SK-N-SH (cell line): ENCODE measurements at regions of chr1 and their contacts with region 1.

Region 1: DNA sequence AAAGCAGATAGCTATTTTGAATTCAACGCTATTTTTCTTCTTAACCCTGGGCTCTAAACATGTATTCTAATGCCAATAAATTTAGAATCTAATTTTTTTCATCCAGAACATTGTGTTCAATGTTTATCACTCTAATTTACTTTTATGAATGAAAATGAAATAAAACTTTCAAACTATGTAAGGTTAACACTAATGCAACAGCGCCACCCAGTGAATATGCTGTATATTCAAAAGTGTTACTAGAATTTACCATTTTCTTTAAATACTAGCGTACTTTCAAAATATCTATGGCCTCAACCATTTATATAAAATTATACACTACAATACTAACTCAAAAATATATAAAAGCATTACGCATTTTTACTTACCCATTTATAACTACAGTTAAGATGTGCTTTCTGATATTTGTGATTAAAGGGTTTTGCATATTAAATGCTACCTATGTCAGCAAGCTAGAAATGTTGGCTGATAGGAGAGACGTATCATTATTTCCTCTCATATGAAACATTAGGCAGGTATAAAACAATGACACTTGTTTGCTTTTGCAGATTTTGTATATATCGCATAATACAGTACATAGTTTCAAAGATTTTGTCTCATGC is 5.9 kb upstream of the NUF2 start:
- DNase-seq: peak; percentile 12
- H3K4me3 ChIP-seq: no peak overlapping the region; a peak in 1 of 4 replicates
- H3K27ac ChIP-seq: peak overlapping the region; percentile 5 to 55; a peak in 3 of 4 replicates
- H3K4me1 ChIP-seq: peaks cover 8 to 9% of the 10 kb centered on the region in 2 experiments; a peak in 3 of 4 replicates
- H3K27me3 ChIP-seq: no peaks in the 10 kb centered on the region
- CTCF ChIP-seq: peak; percentile 88
- EP300 ChIP-seq: no peak
- RAD21 ChIP-seq: peak; percentile 84

Region 2: DNA sequence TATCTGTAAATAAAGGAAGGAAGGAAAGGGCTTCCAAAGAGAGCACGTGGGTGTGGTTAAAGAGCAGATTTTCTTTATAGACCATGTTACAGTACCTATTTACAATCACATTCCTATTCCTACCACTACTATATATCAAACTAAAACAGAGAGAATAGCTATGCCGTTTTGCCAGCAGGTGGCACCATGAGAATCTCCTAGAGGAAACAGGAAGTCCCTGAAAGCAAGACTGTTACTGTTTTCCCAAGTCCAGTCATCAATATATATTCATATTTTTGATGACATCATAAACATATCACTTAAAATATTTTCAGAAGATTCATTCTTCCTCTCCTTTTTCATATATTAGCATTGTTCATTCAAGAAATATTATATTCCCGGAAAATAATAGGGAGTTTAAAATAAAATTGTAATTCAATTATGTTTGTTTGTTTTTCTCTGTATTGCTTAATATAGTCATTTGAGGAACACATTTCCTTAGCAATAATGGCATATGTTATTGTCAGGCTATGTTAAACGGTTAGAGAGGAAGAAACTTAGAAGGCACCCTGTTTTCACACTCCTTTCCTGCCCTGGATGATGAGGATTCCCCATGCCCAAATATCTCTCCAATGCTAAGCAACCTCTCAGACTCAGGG is 461.5 kb before region 1 on chr1:
- CTCF ChIA-PET with region 1: interaction called, 85 read pairs
- POLR2A ChIA-PET with region 1: no interaction called
- DNase-seq: peak; percentile 66
- H3K4me3 ChIP-seq: no peak overlapping the region; a peak in 1 of 4 replicates
- H3K27ac ChIP-seq: peak overlapping the region; percentile 58 to 92; a peak in 3 of 4 replicates
- H3K4me1 ChIP-seq: peaks cover 8 to 43% of the 10 kb centered on the region in 2 experiments; a peak in 3 of 4 replicates
- H3K27me3 ChIP-seq: no peaks in the 10 kb centered on the region
- CTCF ChIP-seq: peak; percentile 94
- EP300 ChIP-seq: no peak
- RAD21 ChIP-seq: peak; percentile 85

Region 3: DNA sequence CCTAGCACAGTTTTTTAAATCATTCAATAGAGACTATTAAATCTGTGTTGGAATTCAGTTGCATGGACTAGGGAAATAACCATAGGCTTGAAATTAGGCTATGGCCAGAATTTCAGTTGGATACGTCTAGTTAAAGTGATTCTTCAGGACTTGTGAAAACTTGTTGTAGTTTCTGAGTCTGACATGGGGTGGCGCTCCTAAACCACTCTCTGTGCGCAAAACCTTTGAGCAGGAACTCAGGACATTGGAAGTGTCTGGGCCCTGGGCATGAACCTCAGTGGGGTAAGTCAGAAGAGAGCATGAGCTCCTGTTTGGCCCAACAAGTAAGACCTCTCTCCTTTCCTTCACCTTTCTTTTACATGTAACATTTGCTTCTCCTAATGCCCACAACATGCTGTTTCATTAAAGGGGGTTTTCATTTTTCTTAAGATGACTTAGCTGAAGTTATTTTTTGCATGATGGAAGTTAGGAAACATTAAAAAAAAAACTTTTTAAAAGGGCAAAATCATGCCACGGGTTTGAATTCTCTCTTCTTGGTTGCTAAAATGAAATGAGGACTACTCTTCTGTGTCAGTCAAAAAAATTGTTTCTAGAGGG is 437.8 kb before region 1 on chr1:
- CTCF ChIA-PET with region 1: interaction called, 51 read pairs
- POLR2A ChIA-PET with region 1: interaction called, 18 read pairs
- DNase-seq: peak; percentile 33
- H3K4me3 ChIP-seq: no peak overlapping the region; a peak in 1 of 4 replicates
- H3K27ac ChIP-seq: peak overlapping the region; percentile 60 to 87
- H3K4me1 ChIP-seq: peaks cover 19 to 24% of the 10 kb centered on the region in 2 experiments
- H3K27me3 ChIP-seq: no peaks in the 10 kb centered on the region
- CTCF ChIP-seq: peak; percentile 91
- EP300 ChIP-seq: no peak
- RAD21 ChIP-seq: peak; percentile 100

Region 4: GRCh38 chr1:163071405-163072255 is 244.2 kb before region 1 on chr1:
- CTCF ChIA-PET with region 1: interaction called, 33 read pairs
- POLR2A ChIA-PET with region 1: interaction called, 8 read pairs
- DNase-seq: peak; percentile 44
- H3K4me3 ChIP-seq: peak overlapping the region; percentile 69 to 82
- H3K27ac ChIP-seq: peak overlapping the region; percentile 91 to 99
- H3K4me1 ChIP-seq: peaks cover 36 to 37% of the 10 kb centered on the region in 2 experiments; a peak in 3 of 4 replicates
- H3K27me3 ChIP-seq: no peaks in the 10 kb centered on the region
- CTCF ChIP-seq: peak; percentile 74
- EP300 ChIP-seq: peak in 1 of 2 experiments; percentile 36; a peak in 1 of 4 replicates
- RAD21 ChIP-seq: peak; percentile 74

Region 5: DNA sequence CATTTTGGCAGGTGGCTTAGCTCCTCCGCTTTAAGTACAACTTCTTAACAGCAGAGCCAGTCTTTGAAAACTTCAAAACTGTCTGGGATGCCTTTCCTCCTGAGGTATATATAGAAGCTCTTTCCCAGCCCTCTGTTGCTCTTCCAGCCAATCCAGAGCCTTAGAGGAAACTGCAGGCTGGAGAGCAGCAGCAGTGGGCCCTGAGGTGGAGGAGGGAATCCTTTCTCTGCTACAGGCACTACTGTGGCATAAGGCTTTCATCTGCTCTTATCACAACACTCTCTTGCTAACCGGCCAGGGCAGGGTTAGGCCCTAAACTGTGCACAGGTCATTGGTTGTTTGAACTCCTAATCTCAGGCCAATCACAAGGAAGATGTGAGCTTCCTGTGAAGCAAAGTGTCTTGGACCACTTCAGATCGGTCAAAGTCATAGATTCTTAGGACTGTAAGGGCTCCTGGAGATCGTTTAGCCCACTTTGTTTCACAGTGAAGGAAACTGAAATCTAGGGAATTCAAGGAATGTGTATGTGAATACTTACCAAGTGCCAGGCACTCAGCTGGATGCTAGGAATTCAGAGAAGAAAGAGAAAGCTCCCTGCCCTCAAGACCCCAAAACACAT is 112.9 kb before region 1 on chr1 and contains the start of gene RGS5:
- CTCF ChIA-PET with region 1: interaction called, 14 read pairs
- POLR2A ChIA-PET with region 1: interaction called, 37 read pairs
- DNase-seq: peak; percentile 73
- H3K4me3 ChIP-seq: peak within 1 kb of the TSS; percentile 62 to 66
- H3K27ac ChIP-seq: peak within 1 kb of the TSS; percentile 77 to 99
- H3K4me1 ChIP-seq: peaks cover 18 to 25% of the 10 kb centered on the region in 2 experiments; a peak in 3 of 4 replicates
- H3K27me3 ChIP-seq: no peaks in the 10 kb centered on the region
- CTCF ChIP-seq: no peak
- EP300 ChIP-seq: peak in 1 of 2 experiments; percentile 44; a peak in 2 of 4 replicates
- RAD21 ChIP-seq: no peak; the same call in 1 of the 2 replicates
- polyA plus RNA-seq, gene RGS5: 260 and 290 TPM in 2 replicates

Region 6: GRCh38 chr1:163331116-163331515 is 15.2 kb after region 1 on chr1:
- CTCF ChIA-PET with region 1: interaction called, 11 read pairs
- POLR2A ChIA-PET with region 1: no interaction called
- DNase-seq: no peak
- H3K4me3 ChIP-seq: no peak overlapping the region
- H3K27ac ChIP-seq: no peak overlapping the region
- H3K4me1 ChIP-seq: no peaks in the 10 kb centered on the region
- H3K27me3 ChIP-seq: no peaks in the 10 kb centered on the region
- CTCF ChIP-seq: no peak
- EP300 ChIP-seq: no peak
- RAD21 ChIP-seq: no peak